Activated B cell treated with CpG ODN at 0.5 μM for 24 hours (primary cell): ENCODE measurements at regions of chr18 and their contacts with region 1.

Region 1: DNA sequence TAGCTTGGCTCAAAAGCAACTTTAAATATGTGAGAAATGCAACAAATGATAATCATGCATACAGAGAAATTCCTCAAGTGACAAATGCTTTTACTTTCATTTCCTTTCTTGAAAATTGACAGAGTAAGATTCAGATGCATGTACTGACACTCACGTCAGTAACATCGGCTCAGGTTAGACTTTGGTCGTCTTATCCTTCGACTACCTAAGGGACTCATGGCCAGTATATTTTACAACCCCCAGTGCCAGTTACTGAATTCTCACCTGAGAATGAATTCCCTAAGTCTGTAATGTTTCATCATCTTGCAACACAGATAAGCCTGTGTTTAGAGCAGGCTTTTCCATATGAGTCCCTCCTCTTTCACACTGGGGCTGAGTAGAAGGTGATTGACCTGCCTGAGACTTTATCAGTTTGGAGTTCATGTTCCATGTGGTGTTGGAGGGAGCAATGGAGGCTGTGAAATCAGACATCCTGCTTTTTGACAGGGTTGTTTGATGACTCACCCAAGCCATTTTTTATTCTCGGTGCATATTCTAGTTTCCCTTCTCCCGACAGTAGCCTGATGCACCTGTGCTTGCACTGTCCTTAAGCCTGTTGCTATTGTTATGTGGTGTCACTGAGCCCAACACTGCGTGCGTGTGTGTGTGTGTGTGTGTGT is 30.5 kb upstream of the ATP8B1 start:
- DNase-seq: no peak
- ATAC-seq: peak; percentile 38
- H3K4me3 Mint-ChIP-seq: peak overlapping the region; percentile 72
- H3K27ac Mint-ChIP-seq: peak overlapping the region; percentile 87
- H3K4me1 Mint-ChIP-seq: peaks cover 64% of the 10 kb centered on the region
- H3K27me3 Mint-ChIP-seq: no peaks in the 10 kb centered on the region
- CTCF ChIP-seq: no peak

Region 2: DNA sequence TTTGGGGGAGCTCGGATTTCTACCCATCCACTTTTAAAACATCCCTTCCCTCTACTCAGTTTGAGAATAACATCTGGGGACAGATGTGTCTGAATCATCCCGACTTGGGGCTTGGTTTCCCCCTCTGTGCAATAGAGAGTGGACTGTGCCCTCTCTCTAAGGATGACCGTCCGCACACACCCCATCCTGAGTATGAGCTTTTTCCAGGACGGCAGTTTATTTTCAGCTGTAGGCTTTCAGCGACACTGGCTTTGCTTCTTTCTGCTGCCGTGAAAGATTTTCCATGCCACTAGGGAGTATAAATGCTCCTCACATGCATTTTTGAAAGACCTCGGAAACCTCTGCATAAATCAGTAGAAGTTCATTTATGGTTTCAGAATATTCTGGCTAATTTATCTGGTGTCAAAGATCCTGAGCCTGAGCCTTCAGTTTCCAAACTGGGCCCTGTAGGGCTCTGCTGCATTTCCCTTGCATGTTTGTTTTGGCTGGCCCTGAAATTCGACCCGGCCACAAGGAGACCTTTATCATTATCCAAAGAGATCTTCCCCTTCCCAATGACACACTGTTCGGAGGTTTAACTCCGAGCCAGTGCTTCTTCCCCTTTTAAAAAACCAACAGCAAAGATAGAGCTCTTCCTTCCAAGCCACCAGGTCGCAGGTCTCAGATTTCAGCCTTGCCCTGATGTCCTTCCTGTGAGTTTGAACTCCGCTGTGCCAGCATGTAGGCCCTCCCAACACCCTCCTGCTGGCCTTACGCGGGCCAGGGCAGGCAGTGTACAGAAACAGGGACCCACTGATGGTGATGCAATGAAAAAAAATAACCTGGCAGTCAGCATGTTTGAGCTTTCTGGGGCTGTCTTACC is 300.3 kb before region 1 on chr18:
- CTCF ChIA-PET with region 1: no interaction called
- POLR2A ChIA-PET with region 1: no interaction called
- intact Hi-C with region 1: no loop called
- DNase-seq: no peak
- ATAC-seq: no peak
- H3K4me3 Mint-ChIP-seq: no peak overlapping the region
- H3K27ac Mint-ChIP-seq: no peak overlapping the region
- H3K4me1 Mint-ChIP-seq: no peaks in the 10 kb centered on the region
- H3K27me3 Mint-ChIP-seq: peaks cover 10% of the 10 kb centered on the region
- CTCF ChIP-seq: no peak

Region 3: GRCh38 chr18:57630002-57630753 is 203.4 kb before region 1 on chr18:
- CTCF ChIA-PET with region 1: interaction called, 5 read pairs
- POLR2A ChIA-PET with region 1: interaction called, 19 read pairs
- intact Hi-C with region 1: loop called (anchors 1 kb)
- DNase-seq: peak; percentile 90
- ATAC-seq: peak; percentile 91
- H3K4me3 Mint-ChIP-seq: peak overlapping the region; percentile 98
- H3K27ac Mint-ChIP-seq: peak overlapping the region; percentile 99
- H3K4me1 Mint-ChIP-seq: peaks cover 26% of the 10 kb centered on the region
- H3K27me3 Mint-ChIP-seq: no peaks in the 10 kb centered on the region
- CTCF ChIP-seq: no peak

Region 4: DNA sequence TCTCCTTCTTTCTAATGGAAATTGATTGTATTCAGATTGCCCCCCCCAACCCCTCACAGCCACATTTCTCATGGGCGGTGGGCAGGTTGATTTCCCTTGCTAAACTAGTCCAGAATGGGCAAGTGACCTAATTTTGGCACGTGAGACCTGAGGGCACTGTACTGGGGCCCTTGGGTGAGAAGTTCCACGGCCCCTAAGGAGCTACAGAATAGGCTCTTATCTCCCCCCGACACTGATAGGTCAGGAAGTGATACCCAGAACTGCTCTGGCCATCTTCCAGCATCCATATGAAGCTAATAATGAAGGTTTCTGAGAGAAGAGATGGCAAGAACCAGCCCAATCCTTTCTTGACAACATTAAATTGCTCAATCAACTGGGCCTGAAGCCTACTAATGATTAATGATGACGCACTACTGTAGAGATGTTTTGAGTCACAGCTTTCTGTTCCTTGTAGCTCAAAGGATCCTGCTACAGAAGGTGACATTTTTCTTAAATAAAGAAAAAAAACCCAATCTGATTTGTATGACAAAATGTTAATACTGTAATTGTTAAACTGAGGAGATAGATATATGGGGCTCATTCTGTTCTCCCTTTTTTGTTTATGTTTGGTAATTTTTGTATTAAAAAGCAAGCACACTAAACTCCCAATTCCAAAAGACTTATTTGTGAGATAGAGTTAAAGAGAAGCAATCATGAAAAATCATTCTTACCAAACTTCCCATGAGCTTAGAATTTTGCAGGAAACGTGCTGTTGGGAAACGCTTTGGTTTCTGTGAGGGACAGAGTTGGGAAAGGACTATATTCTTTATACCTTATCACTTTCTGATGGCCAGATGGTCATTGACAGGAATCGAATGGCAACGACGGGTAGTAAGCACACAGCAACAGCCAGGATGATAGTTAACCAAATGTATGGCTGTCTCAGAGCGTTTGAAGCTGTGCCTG is 183.7 kb before region 1 on chr18:
- CTCF ChIA-PET with region 1: no interaction called
- POLR2A ChIA-PET with region 1: interaction called, 11 read pairs
- intact Hi-C with region 1: loop called (anchors 1 kb)
- DNase-seq: peak; percentile 25
- ATAC-seq: peak; percentile 88
- H3K4me3 Mint-ChIP-seq: peak overlapping the region; percentile 1
- H3K27ac Mint-ChIP-seq: peak overlapping the region; percentile 86
- H3K4me1 Mint-ChIP-seq: peaks cover 48% of the 10 kb centered on the region
- H3K27me3 Mint-ChIP-seq: no peaks in the 10 kb centered on the region
- CTCF ChIP-seq: no peak

Region 5: DNA sequence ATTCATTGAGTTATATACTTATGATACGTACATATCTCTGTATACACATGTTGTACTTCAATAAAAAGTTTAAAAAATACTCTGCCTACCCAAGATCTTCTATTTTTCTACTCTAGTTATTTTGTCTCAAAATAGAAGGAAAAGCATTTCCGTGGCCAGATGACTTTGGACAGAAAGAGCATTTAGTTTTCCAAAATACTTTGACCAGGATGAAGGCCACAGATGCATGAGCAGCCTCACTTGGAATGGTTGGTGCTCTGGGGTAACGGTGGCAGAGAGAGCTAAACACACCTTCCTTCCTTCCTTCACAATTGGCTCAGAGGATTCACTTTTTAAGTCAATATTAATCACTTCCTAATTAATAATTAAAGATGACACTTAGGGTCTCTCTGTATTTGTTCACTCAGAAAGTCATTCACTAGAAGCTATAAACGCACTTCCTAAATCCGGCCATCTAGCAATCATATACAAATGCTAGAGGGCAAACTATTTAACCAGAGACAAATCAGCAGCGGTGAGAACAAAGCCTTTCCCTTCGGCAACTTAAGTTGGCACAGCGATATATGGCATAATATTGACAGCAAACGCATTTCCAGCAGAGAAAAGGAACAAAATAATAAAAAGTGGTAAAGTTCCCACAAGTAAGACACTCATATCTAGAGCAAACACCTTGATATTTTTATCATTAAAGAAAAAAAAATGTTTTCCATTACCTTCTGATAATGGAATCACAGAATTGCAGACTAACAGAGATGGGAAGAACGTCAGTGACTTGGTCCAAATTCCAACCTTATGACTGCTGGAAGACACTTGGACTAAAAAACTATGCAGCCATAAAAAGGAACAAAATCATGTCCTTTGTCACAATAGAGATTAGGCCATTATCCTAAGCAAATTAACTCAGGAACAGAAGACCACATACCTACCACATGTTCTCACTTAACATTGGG is 156.0 kb before region 1 on chr18:
- CTCF ChIA-PET with region 1: no interaction called
- POLR2A ChIA-PET with region 1: no interaction called
- intact Hi-C with region 1: no loop called
- DNase-seq: no peak
- ATAC-seq: no peak
- H3K4me3 Mint-ChIP-seq: no peak overlapping the region
- H3K27ac Mint-ChIP-seq: no peak overlapping the region
- H3K4me1 Mint-ChIP-seq: peaks cover 43% of the 10 kb centered on the region
- H3K27me3 Mint-ChIP-seq: no peaks in the 10 kb centered on the region
- CTCF ChIP-seq: no peak

Region 6: DNA sequence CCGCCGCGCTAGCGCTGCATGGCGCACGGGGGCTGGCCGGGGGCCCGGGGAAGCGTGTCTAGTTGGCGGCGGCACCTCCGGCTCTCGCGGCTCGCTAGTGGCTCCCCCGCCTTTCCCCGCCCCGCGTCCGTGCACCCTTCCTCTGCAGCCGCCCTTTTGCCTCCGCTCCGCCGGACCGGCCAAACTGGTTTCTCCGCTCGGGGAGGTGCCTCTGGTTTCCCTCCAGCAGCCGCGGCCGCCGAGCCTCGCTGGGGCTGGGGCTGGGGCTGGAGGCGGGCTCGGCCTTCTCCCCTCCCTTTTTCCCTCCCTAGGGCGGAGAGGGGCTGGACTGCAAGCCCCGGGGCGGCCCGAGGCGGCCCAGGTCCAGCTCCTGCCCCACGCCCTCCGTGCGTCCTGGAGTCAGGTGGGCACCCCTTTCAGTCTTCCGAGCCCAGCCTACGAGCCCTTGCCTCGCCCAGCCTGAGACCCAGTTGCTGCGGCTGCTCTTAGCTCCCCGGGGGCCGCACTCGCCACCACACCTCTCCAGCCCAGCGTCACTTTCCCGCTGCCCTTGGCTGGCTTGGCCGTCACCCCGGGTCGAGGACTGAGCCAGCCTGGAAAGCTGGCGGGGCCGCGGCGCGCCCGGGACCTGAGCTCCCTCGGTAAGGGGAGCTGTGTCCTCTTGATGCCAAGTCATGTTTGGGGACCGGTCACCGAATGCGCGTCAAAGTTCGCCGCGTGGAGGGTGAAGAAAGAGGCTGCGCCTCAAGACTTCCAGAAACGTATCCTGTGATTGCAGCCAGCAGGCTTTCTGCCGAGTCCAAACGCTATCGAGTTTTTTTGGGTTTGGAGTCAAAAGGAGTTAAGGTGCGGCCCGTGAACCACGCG is 30.2 kb before region 1 on chr18 and contains the start of gene ATP8B1:
- CTCF ChIA-PET with region 1: no interaction called
- POLR2A ChIA-PET with region 1: interaction called, 5 read pairs
- intact Hi-C with region 1: loop called (anchors 2 kb)
- DNase-seq: peak; percentile 29
- ATAC-seq: peak; percentile 78
- H3K4me3 Mint-ChIP-seq: peak within 1 kb of the TSS; percentile 85
- H3K27ac Mint-ChIP-seq: no peak within 1 kb of the TSS
- H3K4me1 Mint-ChIP-seq: peaks cover 24% of the 10 kb centered on the region
- H3K27me3 Mint-ChIP-seq: peaks cover 31% of the 10 kb centered on the region
- CTCF ChIP-seq: no peak
- total RNA-seq, gene ATP8B1: 0.42 and 0.69 TPM in 2 replicates

Region 7: DNA sequence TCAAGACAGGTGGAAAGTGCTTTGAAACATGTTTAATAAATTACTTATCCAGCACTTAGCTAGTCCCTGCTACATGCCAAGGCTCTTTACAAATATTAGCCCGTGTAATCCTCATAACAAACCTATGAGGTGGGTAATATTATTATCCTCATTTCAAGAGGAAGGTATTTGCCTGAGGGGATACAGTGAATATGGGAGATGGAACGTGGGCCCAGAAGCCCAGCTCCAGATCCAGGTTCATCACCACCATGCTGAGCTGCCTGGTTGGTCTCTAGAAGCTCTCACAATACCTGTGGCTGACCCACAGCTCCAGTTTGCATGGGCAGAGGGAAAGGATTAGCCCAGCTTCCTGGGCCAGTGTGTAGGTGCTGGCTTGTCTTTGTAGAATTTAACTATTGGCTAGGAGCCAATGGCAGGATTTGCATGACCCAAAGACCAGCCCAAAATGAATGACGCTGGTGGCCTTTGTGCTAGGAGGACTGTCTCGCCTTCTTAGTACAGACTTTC is 31.1 kb after region 1 on chr18:
- CTCF ChIA-PET with region 1: no interaction called
- POLR2A ChIA-PET with region 1: no interaction called
- intact Hi-C with region 1: no loop called
- DNase-seq: no peak
- ATAC-seq: no peak
- H3K4me3 Mint-ChIP-seq: no peak overlapping the region
- H3K27ac Mint-ChIP-seq: no peak overlapping the region
- H3K4me1 Mint-ChIP-seq: no peaks in the 10 kb centered on the region
- H3K27me3 Mint-ChIP-seq: peaks cover 6% of the 10 kb centered on the region
- CTCF ChIP-seq: no peak

Region 8: GRCh38 chr18:57881818-57882413 is 48.3 kb after region 1 on chr18:
- CTCF ChIA-PET with region 1: interaction called, 8 read pairs
- POLR2A ChIA-PET with region 1: interaction called, 3 read pairs
- intact Hi-C with region 1: loop called (anchors 1 kb)
- DNase-seq: peak; percentile 37
- ATAC-seq: peak; percentile 99
- H3K4me3 Mint-ChIP-seq: no peak overlapping the region
- H3K27ac Mint-ChIP-seq: no peak overlapping the region
- H3K4me1 Mint-ChIP-seq: peaks cover 8% of the 10 kb centered on the region
- H3K27me3 Mint-ChIP-seq: no peaks in the 10 kb centered on the region
- CTCF ChIP-seq: peak; percentile 79

Region 9: GRCh38 chr18:58649966-58650816 is 816.6 kb after region 1 on chr18:
- CTCF ChIA-PET with region 1: no interaction called
- POLR2A ChIA-PET with region 1: no interaction called
- intact Hi-C with region 1: loop called (anchors 10 kb)
- DNase-seq: no peak
- ATAC-seq: peak; percentile 93
- H3K4me3 Mint-ChIP-seq: peak overlapping the region; percentile 24
- H3K27ac Mint-ChIP-seq: peak overlapping the region; percentile 74
- H3K4me1 Mint-ChIP-seq: peaks cover 69% of the 10 kb centered on the region
- H3K27me3 Mint-ChIP-seq: no peaks in the 10 kb centered on the region
- CTCF ChIP-seq: no peak